Adrenal gland (tissue), 19 donors: ENCODE measurements at regions of chr18 and their contacts with region 1.

Region 1: GRCh38 chr18:47772374-47773248 is 157.8 kb downstream of the SMAD2 start:
- DNase-seq: peak; percentile 59 to 86 (median 70)
- H3K4me3 ChIP-seq: no peak overlapping the region
- H3K27ac ChIP-seq: no peak overlapping the region
- H3K4me1 ChIP-seq: no peaks in the 10 kb centered on the region
- H3K27me3 ChIP-seq: no peaks in the 10 kb centered on the region
- CTCF ChIP-seq: peak; percentile 73 to 86 (median 80)
- POLR2A ChIP-seq: no peak

Region 2: DNA sequence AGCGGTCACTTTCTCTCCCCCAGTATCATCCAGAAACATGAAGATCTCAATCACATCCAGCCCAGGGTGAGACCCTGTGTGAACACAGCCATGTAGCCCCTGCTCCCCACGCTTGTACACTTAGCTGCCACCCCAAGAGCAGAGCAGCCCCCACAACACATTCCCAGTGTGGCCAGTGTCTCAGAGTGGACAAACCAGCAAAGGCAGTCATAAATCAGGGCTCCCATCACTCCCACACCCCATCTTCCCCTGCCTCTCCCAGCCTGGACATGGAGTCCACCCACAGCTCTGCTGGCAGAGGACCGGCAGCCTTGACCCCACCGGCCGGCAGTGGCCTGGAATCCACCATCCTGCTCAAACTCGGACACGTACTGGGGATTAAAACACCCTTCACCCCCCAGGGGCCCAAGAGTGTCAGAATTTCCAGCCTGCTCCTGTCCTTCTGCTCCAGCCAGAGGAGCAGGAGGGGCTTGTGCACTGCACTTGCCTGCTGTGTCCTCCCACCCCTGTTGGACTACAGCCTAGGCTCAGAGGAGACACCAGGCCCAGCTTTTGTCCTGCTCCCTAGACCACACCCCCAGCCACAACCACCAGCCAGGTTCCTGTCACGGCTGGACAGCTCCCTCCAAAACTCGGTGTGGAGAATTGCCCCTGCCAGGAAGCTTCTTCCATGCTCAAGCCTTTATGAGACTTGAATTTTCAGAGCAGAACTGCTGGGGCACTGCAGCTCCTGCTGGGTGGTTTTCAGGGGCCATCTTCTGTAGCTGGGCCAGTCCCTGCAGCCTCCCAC is 48.2 kb before region 1 on chr18:
- intact Hi-C with region 1: no loop called
- DNase-seq: peak in 1 of 7 donors; percentile 11
- H3K4me3 ChIP-seq: no peak overlapping the region
- H3K27ac ChIP-seq: no peak overlapping the region
- H3K4me1 ChIP-seq: no peaks in the 10 kb centered on the region
- H3K27me3 ChIP-seq: no peaks in the 10 kb centered on the region
- CTCF ChIP-seq: no peak
- POLR2A ChIP-seq: no peak

Region 3: GRCh38 chr18:48022531-48023329 is 250.1 kb after region 1 on chr18:
- intact Hi-C with region 1: loop called (anchors 5 kb)
- DNase-seq: peak in 4 of 7 donors; percentile 53 to 62 (median 56)
- H3K4me3 ChIP-seq: no peak overlapping the region
- H3K27ac ChIP-seq: peak overlapping the region in 4 of 5 donors; percentile 51 to 75 (median 66)
- H3K4me1 ChIP-seq: peaks cover 24 to 35% of the 10 kb centered on the region in 2 donors
- H3K27me3 ChIP-seq: no peaks in the 10 kb centered on the region
- CTCF ChIP-seq: peak; percentile 47 to 77 (median 65)
- POLR2A ChIP-seq: no peak